ENCODE measurements at regions of chr9 and their contacts with region 1.

Region 1: DNA sequence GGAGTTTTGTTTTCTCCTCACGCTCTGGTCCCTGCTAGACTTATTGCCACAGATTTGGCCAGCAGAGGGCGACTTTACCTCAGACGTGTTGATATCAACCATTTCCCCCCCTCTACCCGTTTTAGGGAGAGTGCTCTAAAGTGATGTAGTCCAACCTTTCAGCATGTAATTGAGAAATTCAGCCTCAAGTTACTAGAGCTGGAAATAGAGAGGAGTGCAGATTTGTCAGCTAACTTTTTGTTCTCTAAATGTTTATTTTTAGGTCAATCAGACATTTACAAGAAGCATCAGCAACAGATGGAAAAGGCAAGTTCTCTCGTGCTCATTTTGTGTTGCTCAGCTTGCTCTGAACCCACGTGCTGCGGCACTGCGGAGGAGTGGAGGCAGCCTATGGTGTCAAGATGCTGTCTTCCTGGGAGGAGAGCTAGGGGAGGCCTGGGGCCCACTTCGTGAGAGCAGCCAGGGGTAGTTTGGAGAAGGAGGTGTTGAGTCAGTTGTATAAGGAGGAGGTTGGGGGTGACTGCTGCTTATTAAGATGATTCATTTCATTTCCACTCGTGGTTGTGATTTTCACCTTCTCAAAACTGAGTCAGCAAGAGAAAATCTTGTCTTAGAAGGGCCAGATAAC is 53.6 kb downstream of the GPR107 start:
- DNase-seq: peak; percentile 94
- H3K4me3 Mint-ChIP-seq: peak overlapping the region; percentile 9
- H3K27ac Mint-ChIP-seq: peak overlapping the region; percentile 72
- H3K4me1 Mint-ChIP-seq: peaks cover 30% of the 10 kb centered on the region
- H3K27me3 Mint-ChIP-seq: no peaks in the 10 kb centered on the region

Region 2: GRCh38 chr9:130128733-130129431 is 21.5 kb after region 1 on chr9:
- intact Hi-C with region 1: loop called (anchors 1 kb)
- DNase-seq: peak; percentile 81
- H3K4me3 Mint-ChIP-seq: peak overlapping the region; percentile 79
- H3K27ac Mint-ChIP-seq: peak overlapping the region; percentile 97
- H3K4me1 Mint-ChIP-seq: peaks cover 43% of the 10 kb centered on the region
- H3K27me3 Mint-ChIP-seq: no peaks in the 10 kb centered on the region

Region 3: DNA sequence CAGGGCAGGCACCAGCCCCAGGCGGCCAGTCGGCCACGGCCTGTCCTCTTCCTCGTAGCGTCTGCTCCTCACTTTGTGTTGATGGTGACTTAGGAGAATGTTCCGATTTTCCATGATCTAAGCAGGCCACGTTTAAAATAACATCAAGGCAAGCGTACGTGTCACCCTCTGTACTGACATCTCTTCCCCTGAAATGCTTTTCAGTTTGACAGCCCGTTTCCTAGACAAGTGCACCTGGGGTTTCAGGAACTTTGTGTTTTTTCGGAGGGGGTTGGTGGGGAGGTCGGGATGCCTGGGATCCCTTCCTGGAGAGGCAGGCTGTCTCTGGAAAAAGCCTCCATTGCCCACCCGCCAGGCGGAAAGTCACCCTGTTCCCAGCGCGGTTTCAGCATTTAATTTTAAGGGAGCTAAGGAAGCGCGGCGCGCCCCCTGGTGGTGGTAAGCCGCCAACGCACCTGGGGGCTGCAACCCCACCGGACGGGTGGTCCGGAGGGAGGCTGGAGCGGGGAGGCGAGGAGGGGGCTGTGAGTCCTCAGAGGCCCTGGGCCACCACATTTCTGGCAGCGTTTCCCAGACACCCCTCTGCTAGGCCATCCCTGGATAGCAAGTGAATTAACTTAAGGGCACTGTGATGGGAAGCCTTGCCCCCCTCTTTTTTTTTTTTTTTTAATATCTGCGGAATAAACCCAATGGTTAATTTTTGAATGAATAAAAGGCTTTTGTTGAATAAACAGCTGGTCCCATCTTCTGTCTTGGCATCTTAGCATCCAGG is 128.7 kb after region 1 on chr9:
- intact Hi-C with region 1: loop called (anchors 1 kb)
- DNase-seq: peak; percentile 91
- H3K4me3 Mint-ChIP-seq: peak overlapping the region; percentile 39
- H3K27ac Mint-ChIP-seq: no peak overlapping the region
- H3K4me1 Mint-ChIP-seq: peaks cover 18% of the 10 kb centered on the region
- H3K27me3 Mint-ChIP-seq: no peaks in the 10 kb centered on the region

Region 4: GRCh38 chr9:130343445-130343918 is 236.1 kb after region 1 on chr9:
- intact Hi-C with region 1: loop called (anchors 5 kb)
- DNase-seq: peak; percentile 75
- H3K4me3 Mint-ChIP-seq: no peak overlapping the region
- H3K27ac Mint-ChIP-seq: no peak overlapping the region
- H3K4me1 Mint-ChIP-seq: no peaks in the 10 kb centered on the region
- H3K27me3 Mint-ChIP-seq: no peaks in the 10 kb centered on the region